ENCODE measurements at regions of chr1 and their contacts with region 1.

Region 1: GRCh38 chr1:43073490-43074230 is 98.4 kb downstream of the EBNA1BP2 start:
- DNase-seq: peak; percentile 52 to 81 (median 64)
- H3K4me3 ChIP-seq: no peak overlapping the region
- H3K4me3 Mint-ChIP-seq: no peak overlapping the region
- H3K27ac ChIP-seq: no peak overlapping the region
- H3K27ac Mint-ChIP-seq: peak overlapping the region in 2 of 8 donors; percentile 15 to 54
- H3K4me1 ChIP-seq: no peaks in the 10 kb centered on the region
- H3K4me1 Mint-ChIP-seq: peaks cover 5 to 11% (median 5%) of the 10 kb centered on the region in 3 donors
- H3K27me3 ChIP-seq: no peaks in the 10 kb centered on the region
- H3K27me3 Mint-ChIP-seq: no peaks in the 10 kb centered on the region

Region 2: DNA sequence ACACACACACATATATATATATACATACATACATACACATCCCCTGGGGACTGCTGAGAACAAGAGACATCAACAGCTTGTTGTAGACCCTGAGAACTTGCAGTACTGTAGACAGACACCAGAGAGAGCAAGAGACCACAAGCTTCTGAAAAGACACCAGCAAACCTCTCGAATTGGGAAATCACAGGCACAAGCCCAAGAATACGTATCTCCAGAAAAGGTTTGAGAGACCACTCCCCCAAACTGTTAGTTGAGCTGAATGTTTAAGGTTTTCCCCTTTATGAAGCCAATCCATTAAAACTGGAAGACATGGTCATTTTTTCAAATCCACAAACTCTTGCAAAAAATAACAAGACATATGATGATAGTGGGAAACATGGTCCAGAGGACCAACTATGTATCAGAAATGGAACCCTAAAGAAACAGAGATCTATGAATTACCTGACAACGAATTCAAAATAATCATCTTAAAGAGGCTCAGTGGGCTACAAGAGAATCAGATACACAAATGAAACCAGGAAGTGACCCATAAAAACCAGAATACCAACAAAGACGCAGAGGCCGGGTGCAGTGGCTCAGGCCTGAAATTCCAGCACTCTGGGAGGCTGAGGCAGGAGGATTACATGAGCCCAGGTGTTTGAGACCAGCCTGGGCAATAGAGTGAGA is 160.1 kb before region 1 on chr1:
- CTCF ChIA-PET with region 1: interaction called, 278 read pairs
- POLR2A ChIA-PET with region 1: interaction called, 5 read pairs
- DNase-seq: peak in 4 of 5 donors; percentile 61 to 71 (median 68)
- H3K4me3 ChIP-seq: no peak overlapping the region
- H3K4me3 Mint-ChIP-seq: no peak overlapping the region
- H3K27ac ChIP-seq: no peak overlapping the region
- H3K27ac Mint-ChIP-seq: no peak overlapping the region
- H3K4me1 ChIP-seq: no peaks in the 10 kb centered on the region
- H3K4me1 Mint-ChIP-seq: peaks cover 0 to 4% (median 3%) of the 10 kb centered on the region in 3 donors
- H3K27me3 ChIP-seq: no peaks in the 10 kb centered on the region
- H3K27me3 Mint-ChIP-seq: peaks cover 7 to 15% of the 10 kb centered on the region in 2 donors

Region 3: GRCh38 chr1:42931108-42931539 is 142.5 kb before region 1 on chr1:
- CTCF ChIA-PET with region 1: interaction called, 141 read pairs
- POLR2A ChIA-PET with region 1: no interaction called
- DNase-seq: peak; percentile 41 to 77 (median 72)
- H3K4me3 ChIP-seq: peak overlapping the region; percentile 30
- H3K4me3 Mint-ChIP-seq: peak overlapping the region; percentile 63 to 88 (median 81)
- H3K27ac ChIP-seq: peak overlapping the region; percentile 77
- H3K27ac Mint-ChIP-seq: peak overlapping the region; percentile 89 to 99 (median 96)
- H3K4me1 ChIP-seq: peaks cover 66% of the 10 kb centered on the region
- H3K4me1 Mint-ChIP-seq: peaks cover 68 to 74% (median 74%) of the 10 kb centered on the region in 3 donors
- H3K27me3 ChIP-seq: no peaks in the 10 kb centered on the region
- H3K27me3 Mint-ChIP-seq: peaks cover 0 to 3% of the 10 kb centered on the region in 2 donors

Region 4: GRCh38 chr1:42952303-42953001 is 121.2 kb before region 1 on chr1:
- CTCF ChIA-PET with region 1: interaction called, 10 read pairs
- POLR2A ChIA-PET with region 1: no interaction called
- DNase-seq: peak in 1 of 5 donors; percentile 68
- H3K4me3 ChIP-seq: peak overlapping the region; percentile 49
- H3K4me3 Mint-ChIP-seq: peak overlapping the region; percentile 46 to 87 (median 64)
- H3K27ac ChIP-seq: peak overlapping the region; percentile 49
- H3K27ac Mint-ChIP-seq: peak overlapping the region; percentile 40 to 95 (median 90)
- H3K4me1 ChIP-seq: peaks cover 91% of the 10 kb centered on the region
- H3K4me1 Mint-ChIP-seq: peaks cover 81 to 94% (median 90%) of the 10 kb centered on the region in 3 donors
- H3K27me3 ChIP-seq: no peaks in the 10 kb centered on the region
- H3K27me3 Mint-ChIP-seq: no peaks in the 10 kb centered on the region

Region 5: GRCh38 chr1:43035821-43036741 is 37.6 kb before region 1 on chr1:
- CTCF ChIA-PET with region 1: interaction called, 11 read pairs
- POLR2A ChIA-PET with region 1: no interaction called
- DNase-seq: no peak
- H3K4me3 ChIP-seq: no peak overlapping the region
- H3K4me3 Mint-ChIP-seq: no peak overlapping the region
- H3K27ac ChIP-seq: no peak overlapping the region
- H3K27ac Mint-ChIP-seq: peak overlapping the region in 3 of 8 donors; percentile 61 to 82 (median 81)
- H3K4me1 ChIP-seq: peaks cover 20% of the 10 kb centered on the region
- H3K4me1 Mint-ChIP-seq: peaks cover 15 to 25% (median 18%) of the 10 kb centered on the region in 3 donors
- H3K27me3 ChIP-seq: no peaks in the 10 kb centered on the region
- H3K27me3 Mint-ChIP-seq: no peaks in the 10 kb centered on the region

Region 6: GRCh38 chr1:43058545-43059355 is 14.9 kb before region 1 on chr1:
- CTCF ChIA-PET with region 1: interaction called, 25 read pairs
- POLR2A ChIA-PET with region 1: interaction called, 4 read pairs
- DNase-seq: no peak
- H3K4me3 ChIP-seq: no peak overlapping the region
- H3K4me3 Mint-ChIP-seq: peak overlapping the region in 2 of 7 donors; percentile 4 to 38
- H3K27ac ChIP-seq: no peak overlapping the region
- H3K27ac Mint-ChIP-seq: peak overlapping the region in 2 of 8 donors; percentile 7 to 11
- H3K4me1 ChIP-seq: peaks cover 8% of the 10 kb centered on the region
- H3K4me1 Mint-ChIP-seq: peaks cover 0 to 13% (median 8%) of the 10 kb centered on the region in 3 donors
- H3K27me3 ChIP-seq: no peaks in the 10 kb centered on the region
- H3K27me3 Mint-ChIP-seq: peaks cover 6 to 24% of the 10 kb centered on the region in 2 donors

Region 7: DNA sequence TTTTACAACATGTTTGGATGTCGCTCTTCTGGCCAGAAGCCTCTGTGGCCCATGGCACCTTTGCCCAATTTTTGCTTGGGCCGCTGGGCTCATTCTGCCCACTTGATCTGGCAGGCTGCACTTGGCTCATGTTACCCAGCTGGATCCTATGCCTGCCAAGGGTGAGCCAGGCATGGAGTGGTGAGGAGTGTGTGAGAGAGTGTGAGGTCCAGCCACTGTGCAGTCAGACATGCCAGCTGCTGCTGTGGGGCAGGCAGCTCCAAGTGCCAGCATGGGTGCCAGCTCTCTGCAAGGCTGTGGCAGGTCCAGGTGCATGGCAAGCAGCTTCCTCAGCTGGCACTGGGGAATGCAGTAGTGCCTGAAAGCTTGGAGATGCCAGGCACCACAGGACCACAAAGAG is 27.4 kb after region 1 on chr1:
- CTCF ChIA-PET with region 1: no interaction called
- POLR2A ChIA-PET with region 1: no interaction called
- DNase-seq: no peak
- H3K4me3 ChIP-seq: no peak overlapping the region
- H3K4me3 Mint-ChIP-seq: no peak overlapping the region
- H3K27ac ChIP-seq: no peak overlapping the region
- H3K27ac Mint-ChIP-seq: no peak overlapping the region
- H3K4me1 ChIP-seq: no peaks in the 10 kb centered on the region
- H3K4me1 Mint-ChIP-seq: no peaks in the 10 kb centered on the region
- H3K27me3 ChIP-seq: no peaks in the 10 kb centered on the region
- H3K27me3 Mint-ChIP-seq: peaks cover 5 to 11% of the 10 kb centered on the region in 2 donors

Region 8: DNA sequence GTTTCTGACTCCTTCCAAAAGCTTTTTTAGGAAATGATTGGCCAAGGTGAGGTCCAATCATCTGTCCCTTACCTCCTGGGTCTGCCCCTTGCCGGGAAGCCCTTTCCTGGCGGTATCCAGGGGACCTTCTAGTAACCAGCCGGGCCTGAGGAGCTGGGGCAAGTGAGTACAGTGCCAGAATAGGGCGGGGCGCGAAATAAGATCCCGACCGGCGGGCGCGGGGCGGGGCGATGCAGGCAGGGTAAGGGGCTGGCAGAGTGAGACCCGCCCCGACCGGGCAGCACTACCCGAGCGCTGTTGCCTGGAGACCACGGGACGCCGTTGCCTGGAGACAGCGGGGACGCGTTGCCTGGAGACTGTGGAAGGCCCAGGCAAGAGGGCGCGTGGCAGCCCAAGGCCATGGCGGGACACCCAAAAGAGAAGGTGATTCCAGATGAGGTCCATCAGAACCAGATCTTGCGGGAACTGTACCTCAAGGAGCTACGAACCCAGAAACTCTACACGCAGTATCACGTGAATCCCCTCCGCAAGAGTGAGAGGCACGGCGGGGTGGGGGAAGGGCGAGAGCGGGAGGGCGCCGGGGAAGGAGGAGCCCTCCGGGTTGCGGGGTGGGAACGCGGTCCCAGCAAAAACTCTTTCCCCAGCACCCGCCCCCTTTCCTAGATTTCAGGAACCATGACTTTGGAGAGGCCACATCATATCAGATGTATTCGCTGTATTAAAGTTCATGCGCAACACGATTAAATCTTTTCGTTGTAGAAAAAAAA is 74.1 kb after region 1 on chr1:
- CTCF ChIA-PET with region 1: no interaction called
- POLR2A ChIA-PET with region 1: no interaction called
- DNase-seq: peak in 1 of 5 donors; percentile 10
- H3K4me3 ChIP-seq: no peak overlapping the region
- H3K4me3 Mint-ChIP-seq: peak overlapping the region in 1 of 7 donors; percentile 9
- H3K27ac ChIP-seq: no peak overlapping the region
- H3K27ac Mint-ChIP-seq: no peak overlapping the region
- H3K4me1 ChIP-seq: no peaks in the 10 kb centered on the region
- H3K4me1 Mint-ChIP-seq: peaks cover 6 to 14% (median 7%) of the 10 kb centered on the region in 3 donors
- H3K27me3 ChIP-seq: peaks cover 36% of the 10 kb centered on the region
- H3K27me3 Mint-ChIP-seq: peaks cover 47 to 88% of the 10 kb centered on the region in 2 donors

Measured in CD8-positive, alpha-beta memory T cell (primary cell).